T-cell (primary cell): ENCODE measurements at regions of chr20 and their contacts with region 1.

Region 1: DNA sequence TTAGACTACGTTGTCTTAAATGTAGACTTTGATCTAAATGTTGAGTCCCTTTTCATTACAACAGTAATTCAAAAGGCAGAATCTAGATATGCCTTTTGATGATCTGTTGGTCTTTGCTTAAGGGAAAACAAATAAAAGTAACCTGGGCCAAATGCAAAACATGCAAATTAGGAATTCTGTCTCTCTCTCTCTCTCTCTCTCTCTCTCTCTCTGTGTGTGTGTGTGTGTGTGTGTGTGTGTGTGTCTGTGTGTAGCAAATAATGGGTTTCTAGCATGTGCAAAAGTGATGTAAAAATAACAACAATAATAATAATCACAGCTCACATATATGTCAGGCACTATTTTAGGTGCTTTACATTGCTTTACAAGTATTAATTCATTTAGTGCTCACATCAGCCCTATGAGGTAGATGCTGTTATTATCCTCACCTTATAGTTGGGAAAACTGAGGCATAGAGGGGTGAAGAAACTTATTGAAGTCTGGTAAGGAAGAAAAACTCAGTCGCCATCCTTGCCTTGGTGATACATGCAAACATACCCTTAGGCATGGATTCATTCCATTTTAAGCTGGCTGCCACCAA is 160.3 kb upstream of the ZNF217 start:
- DNase-seq: no peak
- ATAC-seq: no peak
- H3K4me3 ChIP-seq: no peak overlapping the region
- H3K4me3 Mint-ChIP-seq: peak overlapping the region in 1 of 3 donors; percentile 75
- H3K27ac ChIP-seq: peak overlapping the region; percentile 87
- H3K27ac Mint-ChIP-seq: peak overlapping the region; percentile 89 to 98
- H3K4me1 ChIP-seq: peaks cover 58 to 64% of the 10 kb centered on the region in 2 experiments
- H3K4me1 Mint-ChIP-seq: peaks cover 70 to 79% (median 75%) of the 10 kb centered on the region in 3 donors
- H3K27me3 ChIP-seq: no peaks in the 10 kb centered on the region
- H3K27me3 Mint-ChIP-seq: no peaks in the 10 kb centered on the region

Region 2: DNA sequence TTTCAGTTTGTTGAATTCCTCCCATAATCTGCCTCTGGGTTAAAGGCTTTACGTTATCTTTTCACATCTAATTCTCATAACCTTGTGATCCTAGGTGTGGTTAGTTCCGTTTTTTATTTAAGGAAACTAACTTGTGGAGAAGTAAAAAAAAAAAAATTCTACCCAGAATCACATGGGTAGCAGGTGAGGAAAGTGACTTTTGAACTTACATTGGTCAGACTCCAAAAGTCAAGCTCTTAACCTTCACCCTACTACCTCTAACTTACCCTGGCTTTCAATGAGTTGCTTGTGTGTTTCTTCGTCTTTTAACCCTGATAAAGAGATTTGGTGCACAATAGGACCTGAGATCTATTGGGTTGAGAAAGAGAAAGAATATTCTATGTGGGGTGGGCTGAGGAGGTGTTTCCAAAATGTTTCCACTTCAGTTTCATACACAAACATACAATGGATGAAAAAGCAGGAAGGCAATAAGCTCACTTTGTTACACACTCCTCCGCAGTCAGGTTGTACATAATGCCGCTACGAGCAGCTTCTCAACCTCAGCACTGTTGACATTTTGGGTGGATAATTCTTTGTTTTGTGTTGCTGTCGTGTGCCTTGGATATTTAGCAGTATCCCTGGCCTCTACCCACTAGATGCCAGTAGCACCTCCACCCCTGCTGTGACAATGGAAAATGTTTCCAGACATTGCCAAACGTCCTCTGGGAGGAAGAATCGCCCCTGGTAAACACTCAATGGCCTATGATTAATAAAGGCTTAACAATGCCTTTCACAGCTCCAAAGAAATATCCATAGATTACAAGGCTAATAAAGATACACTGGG is 32.7 kb after region 1 on chr20:
- CTCF ChIA-PET with region 1: no interaction called
- POLR2A ChIA-PET with region 1: interaction called in 1 of 2 experiments, 11 read pairs
- DNase-seq: no peak
- ATAC-seq: no peak
- H3K4me3 ChIP-seq: no peak overlapping the region
- H3K4me3 Mint-ChIP-seq: no peak overlapping the region
- H3K27ac ChIP-seq: no peak overlapping the region
- H3K27ac Mint-ChIP-seq: no peak overlapping the region
- H3K4me1 ChIP-seq: peaks cover 0 to 2% of the 10 kb centered on the region in 2 experiments
- H3K4me1 Mint-ChIP-seq: peaks cover 2 to 15% (median 10%) of the 10 kb centered on the region in 3 donors
- H3K27me3 ChIP-seq: no peaks in the 10 kb centered on the region
- H3K27me3 Mint-ChIP-seq: no peaks in the 10 kb centered on the region

Region 3: GRCh38 chr20:53990768-53991450 is 236.9 kb after region 1 on chr20:
- CTCF ChIA-PET with region 1: no interaction called
- POLR2A ChIA-PET with region 1: no interaction called
- DNase-seq: no peak
- ATAC-seq: no peak
- H3K4me3 ChIP-seq: no peak overlapping the region
- H3K4me3 Mint-ChIP-seq: no peak overlapping the region
- H3K27ac ChIP-seq: no peak overlapping the region
- H3K27ac Mint-ChIP-seq: no peak overlapping the region
- H3K4me1 ChIP-seq: no peaks in the 10 kb centered on the region
- H3K4me1 Mint-ChIP-seq: peaks cover 0 to 4% (median 0%) of the 10 kb centered on the region in 3 donors
- H3K27me3 ChIP-seq: peaks cover 0 to 2% of the 10 kb centered on the region in 2 experiments
- H3K27me3 Mint-ChIP-seq: peaks cover 23 to 35% of the 10 kb centered on the region in 2 donors